K562 (cell line): ENCODE measurements at regions of chr3 and their contacts with region 1.

Region 1: GRCh38 chr3:119891944-119892721 is 110.2 kb downstream of the NR1I2 start:
- DNase-seq: peak; percentile 6 to 62 (median 11)
- ATAC-seq: peak; percentile 76
- H3K4me3 ChIP-seq: no peak overlapping the region
- H3K27ac ChIP-seq: no peak overlapping the region
- H3K4me1 ChIP-seq: no peaks in the 10 kb centered on the region
- H3K27me3 ChIP-seq: no peaks in the 10 kb centered on the region
- CTCF ChIP-seq: peak; percentile 38 to 66 (median 57); a peak in 5 of 6 replicates
- EP300 ChIP-seq: no peak
- POLR2A ChIP-seq: no peak
- RAD21 ChIP-seq: peak; percentile 54 to 80

Region 2: GRCh38 chr3:120052225-120052624 is 160.1 kb after region 1 on chr3:
- CTCF ChIA-PET with region 1: no interaction called
- POLR2A ChIA-PET with region 1: no interaction called
- in situ Hi-C with region 1: no loop called
- intact Hi-C with region 1: no loop called
- DNase-seq: no peak
- ATAC-seq: no peak
- H3K4me3 ChIP-seq: no peak overlapping the region
- H3K27ac ChIP-seq: no peak overlapping the region
- H3K4me1 ChIP-seq: no peaks in the 10 kb centered on the region; a peak in 1 of 5 replicates
- H3K27me3 ChIP-seq: no peaks in the 10 kb centered on the region
- CTCF ChIP-seq: no peak
- EP300 ChIP-seq: no peak
- POLR2A ChIP-seq: no peak
- RAD21 ChIP-seq: no peak

Region 3: DNA sequence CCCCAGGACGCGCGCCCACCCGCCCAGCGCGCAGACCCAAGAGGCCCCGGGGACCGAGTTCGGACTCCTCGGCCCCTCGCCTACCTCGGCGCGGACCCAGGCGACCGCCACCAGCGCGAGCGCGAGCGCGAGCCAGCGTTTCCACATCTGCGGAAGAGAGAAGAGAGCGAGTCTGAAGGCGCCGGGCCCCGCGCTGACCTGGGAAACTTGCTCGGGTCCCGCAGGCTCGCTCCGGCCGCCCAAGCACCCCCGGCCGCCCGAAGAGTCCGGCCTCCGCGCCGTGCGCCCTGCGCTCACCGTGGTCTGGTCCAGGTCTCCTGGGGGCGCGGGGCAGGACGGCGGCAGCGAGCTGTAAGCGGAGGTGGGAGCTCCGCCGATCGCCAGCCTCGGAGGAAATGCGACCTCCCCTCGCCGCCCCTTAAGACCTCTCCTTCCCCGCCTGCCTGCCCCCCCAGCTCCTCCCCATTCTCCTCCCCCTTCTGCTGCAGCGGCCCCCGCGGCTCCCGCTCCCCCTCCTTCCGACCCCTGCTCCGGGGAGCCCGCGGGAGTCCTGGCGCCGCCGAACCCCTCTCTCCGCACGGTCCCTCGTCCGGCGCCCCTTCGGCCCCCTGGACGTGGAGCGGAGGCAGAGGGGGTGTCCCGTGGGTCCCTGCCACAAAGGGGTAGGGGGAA is 558.6 kb after region 1 on chr3 and contains the start of gene FSTL1:
- CTCF ChIA-PET with region 1: no interaction called
- POLR2A ChIA-PET with region 1: no interaction called
- in situ Hi-C with region 1: loop called (anchors 25 kb)
- intact Hi-C with region 1: no loop called
- DNase-seq: no peak
- ATAC-seq: no peak
- H3K4me3 ChIP-seq: no peak within 1 kb of the TSS
- H3K27ac ChIP-seq: no peak within 1 kb of the TSS
- H3K4me1 ChIP-seq: peaks cover 0 to 10% of the 10 kb centered on the region in 2 experiments; a peak in 2 of 5 replicates
- H3K27me3 ChIP-seq: peaks cover 7 to 21% of the 10 kb centered on the region in 2 experiments; a peak in 4 of 5 replicates
- CTCF ChIP-seq: no peak
- EP300 ChIP-seq: no peak
- POLR2A ChIP-seq: no peak
- RAD21 ChIP-seq: no peak
- polyA plus RNA-seq, gene FSTL1: 0.01 TPM in 1 of 2 experiments, not detected in the other